A549 (cell line): ENCODE measurements at regions of chr16 and their contacts with region 1.

Region 1: DNA sequence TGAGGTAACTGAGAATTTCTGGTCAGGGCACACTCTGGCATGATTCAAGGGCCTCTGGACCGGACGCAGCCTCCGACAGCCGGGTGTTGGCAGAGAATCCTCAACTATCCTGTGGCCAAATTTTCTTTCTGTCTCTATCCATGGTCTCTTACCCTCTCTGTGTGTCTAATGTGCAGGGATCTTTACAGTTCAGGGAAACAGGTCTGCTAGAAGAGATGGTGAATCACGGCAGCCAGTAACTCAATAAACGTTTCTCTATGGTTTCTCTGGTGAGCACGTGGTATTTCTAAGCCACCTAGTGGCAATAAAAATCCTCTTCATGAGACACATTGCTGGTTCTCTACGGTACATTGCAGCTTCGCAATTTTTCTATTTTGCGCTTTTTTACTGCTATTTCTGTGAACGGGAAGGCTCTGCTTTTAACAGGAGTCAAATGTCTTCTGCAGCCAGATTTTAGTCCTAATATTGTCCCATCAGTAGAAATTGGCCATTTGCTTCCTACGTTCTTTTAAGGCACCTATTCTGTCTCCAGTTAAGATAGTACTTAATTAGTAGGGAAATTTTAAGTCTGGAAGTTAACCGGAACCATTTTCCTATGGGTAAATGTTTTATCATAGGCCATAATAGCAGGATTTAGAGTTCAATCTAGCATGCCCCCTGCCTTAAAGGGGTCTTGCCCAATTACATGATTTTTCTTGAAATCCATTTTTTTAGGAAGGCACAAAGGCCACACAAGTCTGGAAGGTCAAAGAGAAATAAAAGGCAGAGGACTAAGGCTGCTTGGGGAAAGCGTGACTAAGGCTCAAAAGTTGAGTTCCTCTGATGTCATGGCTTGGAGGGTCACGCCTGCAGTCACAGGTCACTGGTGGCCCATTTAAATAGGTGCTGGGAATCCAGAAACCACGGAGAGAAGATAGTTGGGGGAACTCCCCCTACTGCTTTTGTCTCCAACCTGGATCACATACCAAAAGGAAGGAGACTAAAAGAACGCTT is 31.5 kb downstream of the QPRT start:
- DNase-seq: peak; percentile 66 to 73
- ATAC-seq: peak; percentile 97 to 98
- H3K4me3 ChIP-seq: no peak overlapping the region
- H3K27ac ChIP-seq: no peak overlapping the region
- H3K4me1 ChIP-seq: peaks cover 6% of the 10 kb centered on the region; the same call in 1 of the 3 replicates
- CTCF ChIP-seq: peak; percentile 55; the same call in 2 of the 3 replicates
- EP300 ChIP-seq: no peak
- POLR2A ChIP-seq: no peak
- RAD21 ChIP-seq: peak in 1 of 2 experiments; percentile 37; a peak in 2 of 5 replicates

Region 2: GRCh38 chr16:29645694-29646187 is 64.8 kb before region 1 on chr16:
- CTCF ChIA-PET with region 1: no interaction called
- POLR2A ChIA-PET with region 1: no interaction called
- DNase-seq: peak in 1 of 2 experiments; percentile 76
- ATAC-seq: peak; percentile 34 to 64; a peak in 3 of 6 replicates
- H3K4me3 ChIP-seq: no peak overlapping the region
- H3K27ac ChIP-seq: no peak overlapping the region
- H3K4me1 ChIP-seq: 0 out of 3 replicates have a peak, but pooled peaks cover 3% of the 10 kb centered on the region
- CTCF ChIP-seq: no peak
- EP300 ChIP-seq: no peak
- POLR2A ChIP-seq: no peak
- RAD21 ChIP-seq: no peak

Region 3: DNA sequence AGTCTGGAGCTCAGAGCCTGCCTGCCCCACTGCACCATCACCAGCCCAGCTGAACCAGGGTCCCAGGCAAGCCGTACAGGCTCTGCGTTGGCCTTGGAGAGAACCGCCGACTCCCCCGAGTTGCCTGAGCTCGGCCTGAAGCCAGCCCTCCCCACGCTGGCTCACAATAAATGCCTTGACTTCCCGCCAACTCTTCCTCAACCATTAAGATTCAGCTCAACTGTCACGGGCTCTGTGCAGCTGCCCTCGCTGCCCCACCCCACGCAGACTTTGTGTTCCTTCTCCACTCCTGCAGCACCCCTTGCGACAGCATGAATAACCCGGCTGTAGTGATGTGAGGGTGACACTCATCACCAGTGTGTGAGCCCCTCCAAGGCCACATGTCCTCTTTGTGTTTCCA is 36.3 kb before region 1 on chr16:
- CTCF ChIA-PET with region 1: no interaction called
- POLR2A ChIA-PET with region 1: no interaction called
- DNase-seq: no peak
- ATAC-seq: no peak
- H3K4me3 ChIP-seq: no peak overlapping the region
- H3K27ac ChIP-seq: no peak overlapping the region
- H3K4me1 ChIP-seq: peaks cover 6% of the 10 kb centered on the region; the same call in 1 of the 3 replicates
- CTCF ChIP-seq: no peak
- EP300 ChIP-seq: no peak
- POLR2A ChIP-seq: no peak
- RAD21 ChIP-seq: no peak

Region 4: DNA sequence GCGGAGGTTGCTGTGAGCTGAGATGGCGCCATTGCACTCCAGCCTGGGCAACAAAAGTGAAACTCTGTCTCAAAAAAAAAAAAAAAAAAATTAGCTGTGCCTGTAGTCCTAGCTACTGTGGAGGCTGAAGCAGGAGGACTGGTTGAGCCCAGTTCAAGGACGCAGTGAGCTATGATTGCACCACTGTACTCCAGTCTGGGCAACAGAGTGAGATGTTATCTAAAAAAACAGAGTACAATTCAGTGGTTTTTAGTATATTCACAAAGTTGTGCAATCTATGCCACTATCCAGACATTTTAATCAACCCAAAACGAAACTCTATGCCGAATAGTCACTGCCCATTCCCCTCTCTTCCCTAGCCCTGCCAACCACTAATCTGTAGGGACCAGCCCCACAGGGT is 10.2 kb after region 1 on chr16:
- CTCF ChIA-PET with region 1: interaction called, 84 read pairs
- POLR2A ChIA-PET with region 1: no interaction called
- DNase-seq: no peak
- ATAC-seq: no peak
- H3K4me3 ChIP-seq: no peak overlapping the region
- H3K27ac ChIP-seq: no peak overlapping the region
- H3K4me1 ChIP-seq: no peaks in the 10 kb centered on the region
- CTCF ChIP-seq: no peak
- EP300 ChIP-seq: no peak
- POLR2A ChIP-seq: no peak
- RAD21 ChIP-seq: no peak

Region 5: DNA sequence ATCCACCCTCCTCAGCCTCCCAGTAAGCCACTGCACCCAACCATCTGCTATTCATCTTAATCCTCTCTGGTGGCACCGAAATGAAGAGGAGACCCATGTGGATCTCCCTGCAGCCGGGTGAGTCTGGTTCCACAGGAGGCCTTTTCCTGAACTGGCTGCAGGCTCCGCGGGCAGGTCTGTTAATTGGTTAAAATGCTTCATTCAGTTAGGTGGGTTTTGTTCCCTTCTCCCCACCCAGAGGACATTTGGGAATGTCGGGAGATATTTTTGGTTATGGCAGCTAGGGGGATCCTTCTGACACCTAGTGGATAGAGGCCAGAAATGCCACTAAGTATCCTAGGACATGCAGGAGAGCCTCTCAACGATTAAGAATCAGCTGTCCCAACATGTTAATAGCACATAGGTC is 18.6 kb after region 1 on chr16:
- CTCF ChIA-PET with region 1: interaction called, 84 read pairs
- POLR2A ChIA-PET with region 1: no interaction called
- DNase-seq: peak; percentile 68 to 83
- ATAC-seq: peak; percentile 96 to 98
- H3K4me3 ChIP-seq: peak overlapping the region; percentile 34; the same call in 2 of the 3 replicates
- H3K27ac ChIP-seq: peak overlapping the region; percentile 54 to 71; a peak in 4 of 6 replicates
- H3K4me1 ChIP-seq: 0 out of 3 replicates have a peak, but pooled peaks cover 3% of the 10 kb centered on the region
- CTCF ChIP-seq: peak; percentile 64
- EP300 ChIP-seq: no peak
- POLR2A ChIP-seq: no peak
- RAD21 ChIP-seq: peak; percentile 52; a peak in 4 of 5 replicates